Activated CD4-positive, alpha-beta memory T cell treated with anti-CD3 and anti-CD28 coated beads for 36 hours (primary cell): ENCODE measurements at regions of chr14 and their contacts with region 1.

Region 1: GRCh38 chr14:69547701-69548348 is 26.8 kb downstream of the CCDC177 start:
- DNase-seq: peak; percentile 44
- H3K4me3 Mint-ChIP-seq: no peak overlapping the region
- H3K27ac Mint-ChIP-seq: no peak overlapping the region
- H3K4me1 Mint-ChIP-seq: peaks cover 11% of the 10 kb centered on the region
- H3K27me3 Mint-ChIP-seq: peaks cover 40% of the 10 kb centered on the region

Region 2: DNA sequence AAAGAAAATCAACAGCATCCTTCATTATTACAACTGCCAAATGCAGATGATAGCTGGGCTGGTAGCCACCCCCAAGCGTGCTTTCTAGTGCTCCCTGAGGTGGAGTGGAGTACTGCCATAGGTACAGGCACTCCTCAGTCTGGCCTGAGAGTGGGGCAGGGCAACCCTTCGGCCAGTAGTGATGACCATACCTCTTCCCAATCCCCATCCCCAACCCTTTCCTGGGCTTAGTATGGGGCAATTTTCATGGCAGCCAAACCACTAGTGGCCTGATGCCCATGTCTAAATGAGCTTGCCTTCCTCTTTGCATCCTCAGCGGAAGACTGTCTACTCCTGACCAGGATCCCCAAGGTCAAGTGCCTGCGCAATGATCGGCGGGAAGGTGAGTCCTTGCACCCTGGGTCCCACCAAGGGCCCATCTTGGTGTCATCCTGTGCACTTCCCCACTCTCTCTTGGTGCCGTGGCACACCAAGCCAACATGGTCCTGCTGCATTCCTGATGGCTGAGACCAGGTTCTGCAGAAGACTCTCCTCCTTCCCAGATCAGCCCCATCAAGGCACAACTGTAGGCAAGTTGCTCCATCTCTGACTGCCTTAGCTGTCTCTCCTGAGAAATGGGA is 222.1 kb before region 1 on chr14:
- CTCF ChIA-PET with region 1: no interaction called
- POLR2A ChIA-PET with region 1: no interaction called
- intact Hi-C with region 1: no loop called
- DNase-seq: peak; percentile 1
- H3K4me3 Mint-ChIP-seq: no peak overlapping the region
- H3K27ac Mint-ChIP-seq: no peak overlapping the region
- H3K4me1 Mint-ChIP-seq: no peaks in the 10 kb centered on the region
- H3K27me3 Mint-ChIP-seq: no peaks in the 10 kb centered on the region

Region 3: DNA sequence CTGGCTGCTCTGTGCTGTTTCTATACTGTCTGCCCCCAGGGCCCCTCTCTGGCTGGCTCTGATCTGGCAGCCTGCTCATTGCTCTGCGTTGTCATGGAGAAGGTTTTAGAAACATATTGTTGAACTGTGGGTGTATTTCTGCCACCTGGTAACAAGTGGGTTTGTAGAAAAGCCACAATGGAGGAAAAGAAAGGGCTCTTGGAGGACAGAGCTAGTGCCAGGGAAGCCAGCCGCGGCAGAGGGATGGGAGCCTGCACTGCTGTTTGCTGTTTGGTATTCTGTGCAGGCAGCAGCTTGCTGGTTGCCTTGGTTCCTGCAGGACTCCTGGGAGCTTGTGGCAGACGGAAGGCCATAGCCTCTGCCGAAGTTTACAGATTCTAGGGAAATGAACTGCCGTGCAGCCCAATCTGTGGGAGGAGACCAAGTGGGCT is 11.8 kb after region 1 on chr14:
- CTCF ChIA-PET with region 1: interaction called, 17 read pairs
- POLR2A ChIA-PET with region 1: interaction called, 3 read pairs
- intact Hi-C with region 1: no loop called
- DNase-seq: no peak
- H3K4me3 Mint-ChIP-seq: no peak overlapping the region
- H3K27ac Mint-ChIP-seq: no peak overlapping the region
- H3K4me1 Mint-ChIP-seq: no peaks in the 10 kb centered on the region
- H3K27me3 Mint-ChIP-seq: peaks cover 20% of the 10 kb centered on the region